H1 (cell line): ENCODE measurements at regions of chr7 and their contacts with region 1.

Region 1: GRCh38 chr7:5557920-5558401 is 134.3 kb upstream of the TNRC18 start:
- DNase-seq: no peak
- H3K4me3 ChIP-seq: no peak overlapping the region
- H3K27ac ChIP-seq: no peak overlapping the region
- H3K4me1 ChIP-seq: peaks cover 0 to 15% (median 11%) of the 10 kb centered on the region in 4 experiments; a peak in 5 of 7 replicates
- H3K27me3 ChIP-seq: no peaks in the 10 kb centered on the region
- CTCF ChIP-seq: no peak
- EP300 ChIP-seq: no peak
- POLR2A ChIP-seq: no peak
- RAD21 ChIP-seq: no peak

Region 2: DNA sequence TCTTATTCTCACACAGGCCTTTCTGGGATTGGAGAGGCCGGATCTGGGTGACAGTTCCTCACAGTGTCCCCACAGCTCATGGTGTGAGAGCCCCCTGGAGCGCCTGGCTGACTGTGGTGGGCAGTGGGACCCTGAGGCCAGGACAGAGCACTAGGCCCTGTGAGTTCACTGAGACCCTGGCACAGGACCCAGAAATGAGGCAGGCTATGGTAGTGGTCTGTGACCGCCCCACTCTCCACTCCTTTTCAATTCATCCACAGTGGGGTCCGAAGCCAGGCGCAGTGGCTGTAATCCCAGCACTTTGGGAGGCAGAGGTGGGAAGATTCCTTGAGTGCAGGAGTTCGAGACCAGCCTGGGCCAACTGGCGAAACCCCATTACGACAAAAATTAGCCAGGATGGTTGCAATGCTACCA is 38.4 kb before region 1 on chr7:
- CTCF ChIA-PET with region 1: interaction called, 18 read pairs
- POLR2A ChIA-PET with region 1: no interaction called
- DNase-seq: peak in 1 of 2 experiments; percentile 67
- H3K4me3 ChIP-seq: no peak overlapping the region
- H3K27ac ChIP-seq: no peak overlapping the region
- H3K4me1 ChIP-seq: no peaks in the 10 kb centered on the region; a peak in 1 of 7 replicates
- H3K27me3 ChIP-seq: no peaks in the 10 kb centered on the region
- CTCF ChIP-seq: no peak
- EP300 ChIP-seq: no peak
- POLR2A ChIP-seq: peak; percentile 70 to 93; a peak in 2 of 3 replicates
- RAD21 ChIP-seq: no peak

Region 3: DNA sequence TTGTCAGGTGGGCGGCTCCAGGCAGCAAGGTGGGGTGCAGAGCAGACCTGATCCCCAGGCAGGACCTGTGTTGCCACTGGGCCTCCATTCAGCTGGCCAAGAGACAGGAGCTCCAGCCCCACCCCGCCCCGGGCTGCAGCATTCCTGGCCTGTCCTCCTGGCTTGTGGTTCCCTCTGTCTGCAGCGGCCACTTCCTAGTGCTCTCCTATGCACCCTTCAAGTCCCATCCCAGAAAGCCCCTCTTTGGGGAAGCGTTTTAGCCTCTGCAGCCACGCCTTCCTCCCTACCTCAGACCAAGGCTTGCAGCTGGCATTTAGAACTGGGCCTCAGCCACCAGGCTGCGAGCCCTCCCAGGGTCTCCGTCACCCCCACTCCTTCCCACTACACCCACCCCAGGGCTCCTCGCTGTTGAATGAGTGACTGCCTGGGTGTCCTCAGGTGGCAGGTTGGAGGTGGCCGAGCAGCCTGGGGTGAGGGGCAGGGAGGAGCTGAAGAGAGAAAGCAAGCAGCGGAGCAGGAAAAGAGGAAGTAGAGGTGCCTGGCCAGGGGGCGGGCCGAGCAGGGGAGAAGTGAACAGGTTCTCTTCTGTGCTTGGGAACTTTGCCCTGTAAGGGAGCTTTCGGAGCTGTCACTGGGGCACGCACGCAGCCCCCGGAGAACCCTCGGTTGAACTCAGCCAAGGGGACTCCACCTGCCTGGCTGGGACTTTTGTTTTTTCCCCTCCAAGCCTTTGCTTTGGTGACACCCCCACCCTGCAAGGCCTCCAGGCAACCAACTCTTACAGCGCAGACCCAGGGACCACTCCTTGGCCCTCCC is 25.2 kb before region 1 on chr7:
- CTCF ChIA-PET with region 1: interaction called, 24 read pairs
- POLR2A ChIA-PET with region 1: no interaction called
- DNase-seq: peak in 1 of 2 experiments; percentile 69
- H3K4me3 ChIP-seq: peak overlapping the region; percentile 0 to 47 (median 19); a peak in 5 of 8 replicates
- H3K27ac ChIP-seq: peak overlapping the region; percentile 99; the same call in 1 of the 2 replicates
- H3K4me1 ChIP-seq: peaks cover 2 to 36% (median 28%) of the 10 kb centered on the region in 4 experiments
- H3K27me3 ChIP-seq: no peaks in the 10 kb centered on the region
- CTCF ChIP-seq: no peak
- EP300 ChIP-seq: no peak
- POLR2A ChIP-seq: peak in 1 of 2 experiments; percentile 76; a peak in 2 of 3 replicates
- RAD21 ChIP-seq: no peak

Region 4: GRCh38 chr7:5580714-5581395 is 22.9 kb after region 1 on chr7:
- CTCF ChIA-PET with region 1: interaction called, 11 read pairs
- POLR2A ChIA-PET with region 1: no interaction called
- DNase-seq: peak in 1 of 2 experiments; percentile 55
- H3K4me3 ChIP-seq: no peak overlapping the region; a peak in 1 of 8 replicates
- H3K27ac ChIP-seq: no peak overlapping the region
- H3K4me1 ChIP-seq: no peaks in the 10 kb centered on the region; a peak in 1 of 7 replicates
- H3K27me3 ChIP-seq: no peaks in the 10 kb centered on the region
- CTCF ChIP-seq: peak in 1 of 3 experiments; percentile 16; a peak in 1 of 4 replicates
- EP300 ChIP-seq: no peak
- POLR2A ChIP-seq: no peak
- RAD21 ChIP-seq: peak; percentile 0 to 22; a peak in 1 of 4 replicates

Region 5: GRCh38 chr7:5677538-5678294 is 119.8 kb after region 1 on chr7:
- CTCF ChIA-PET with region 1: interaction called, 20 read pairs
- POLR2A ChIA-PET with region 1: interaction called, 3 read pairs
- DNase-seq: peak in 1 of 2 experiments; percentile 78
- H3K4me3 ChIP-seq: no peak overlapping the region
- H3K27ac ChIP-seq: no peak overlapping the region
- H3K4me1 ChIP-seq: peaks cover 2 to 10% (median 6%) of the 10 kb centered on the region in 4 experiments; a peak in 6 of 7 replicates
- H3K27me3 ChIP-seq: no peaks in the 10 kb centered on the region
- CTCF ChIP-seq: peak; percentile 33 to 86 (median 77)
- EP300 ChIP-seq: no peak
- POLR2A ChIP-seq: no peak
- RAD21 ChIP-seq: peak; percentile 90 to 92